Endothelial cell of umbilical vein (primary cell): ENCODE measurements at regions of chr2 and their contacts with region 1.

Region 1: GRCh38 chr2:237691908-237692600 is 64.7 kb downstream of the LRRFIP1 start:
- DNase-seq: peak; percentile 69
- H3K4me3 ChIP-seq: peak overlapping the region; percentile 81 to 86 (median 84)
- H3K27ac ChIP-seq: peak overlapping the region; percentile 87
- H3K4me1 ChIP-seq: peaks cover 55% of the 10 kb centered on the region
- H3K27me3 ChIP-seq: no peaks in the 10 kb centered on the region
- CTCF ChIP-seq: no peak
- POLR2A ChIP-seq: no peak

Region 2: DNA sequence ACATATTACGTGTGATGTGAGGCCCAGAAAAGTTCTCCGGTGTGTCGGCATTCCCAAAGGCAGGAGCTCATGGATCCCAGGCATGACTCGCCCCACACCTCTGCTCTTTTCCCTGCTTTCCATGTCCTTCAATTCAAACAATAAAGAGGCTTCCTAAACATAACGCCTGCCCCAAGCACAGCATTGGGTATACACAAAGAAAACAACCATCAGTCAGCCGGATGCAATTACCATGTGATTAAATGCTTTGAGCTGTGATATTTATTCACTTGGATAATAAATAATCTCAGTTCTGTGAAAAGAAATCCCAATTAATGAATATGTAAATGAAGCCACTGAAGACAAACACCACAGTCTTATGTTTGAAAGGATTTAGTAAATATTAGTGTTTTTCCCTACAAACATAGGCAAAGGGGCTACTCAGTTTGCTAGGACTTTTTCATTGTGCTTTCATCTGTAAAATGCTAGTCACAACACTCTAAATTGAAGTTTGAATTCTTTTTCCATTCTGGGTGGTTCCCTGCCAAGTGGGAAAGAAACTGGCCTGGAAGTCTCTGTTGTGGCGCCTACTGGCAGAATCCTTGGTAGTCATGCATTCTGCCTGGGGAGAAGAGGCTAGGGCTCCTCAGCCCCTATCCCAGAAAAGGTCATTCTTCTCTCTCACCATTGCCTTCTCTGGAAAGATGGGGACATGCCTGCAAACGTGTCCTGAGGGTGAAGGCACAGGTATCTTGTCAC is 422.7 kb before region 1 on chr2:
- CTCF ChIA-PET with region 1: no interaction called
- POLR2A ChIA-PET with region 1: no interaction called
- dilution Hi-C with region 1: no loop called
- intact Hi-C with region 1: no loop called
- DNase-seq: no peak
- H3K4me3 ChIP-seq: no peak overlapping the region
- H3K27ac ChIP-seq: no peak overlapping the region
- H3K4me1 ChIP-seq: no peaks in the 10 kb centered on the region
- H3K27me3 ChIP-seq: peaks cover 6% of the 10 kb centered on the region in 2 experiments
- CTCF ChIP-seq: no peak
- POLR2A ChIP-seq: no peak

Region 3: DNA sequence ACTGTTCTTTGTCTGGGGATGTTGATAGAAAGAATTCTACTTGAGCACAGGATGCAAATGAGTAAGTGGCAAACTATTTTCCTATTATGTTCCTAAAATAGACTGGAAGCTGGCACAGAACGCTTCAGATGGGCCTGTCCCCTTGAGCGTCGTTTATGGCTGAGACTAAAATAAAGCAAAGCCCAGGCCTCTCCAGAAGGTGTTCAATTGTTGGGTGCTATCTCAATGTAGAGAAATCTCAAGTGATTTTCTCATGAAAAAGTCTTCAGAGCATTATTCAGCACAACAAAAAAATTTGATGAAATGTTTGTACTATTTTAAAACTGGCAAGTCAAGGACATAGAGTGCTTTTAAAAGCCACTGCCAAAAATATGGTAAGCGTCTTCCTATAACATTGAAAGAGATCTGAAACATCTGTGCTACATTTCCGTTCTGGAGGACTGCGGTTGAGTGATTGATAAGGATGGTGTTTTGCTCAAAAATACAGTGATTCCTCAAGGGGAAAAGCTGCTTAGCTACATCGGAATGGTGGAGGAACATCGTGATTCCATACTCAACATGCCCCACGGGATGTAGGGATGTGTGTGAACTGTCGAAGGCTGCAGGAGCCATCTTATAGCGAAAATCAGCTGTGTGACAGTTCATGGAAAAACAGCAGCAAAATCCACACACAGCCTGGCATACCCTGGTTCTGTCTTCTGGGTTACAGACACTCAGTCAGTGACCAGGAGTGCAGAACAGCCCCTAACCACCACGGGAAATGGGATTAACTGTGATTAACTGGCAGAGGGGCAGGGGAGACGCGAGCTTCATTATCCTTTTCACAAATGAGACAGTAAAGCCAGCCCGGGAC is 75.1 kb before region 1 on chr2:
- CTCF ChIA-PET with region 1: interaction called, 4 read pairs
- POLR2A ChIA-PET with region 1: no interaction called
- dilution Hi-C with region 1: no loop called
- intact Hi-C with region 1: loop called (anchors 1 kb)
- DNase-seq: peak; percentile 91
- H3K4me3 ChIP-seq: no peak overlapping the region
- H3K27ac ChIP-seq: peak overlapping the region; percentile 99
- H3K4me1 ChIP-seq: peaks cover 54% of the 10 kb centered on the region
- H3K27me3 ChIP-seq: no peaks in the 10 kb centered on the region
- CTCF ChIP-seq: no peak
- POLR2A ChIP-seq: peak; percentile 28

Region 4: DNA sequence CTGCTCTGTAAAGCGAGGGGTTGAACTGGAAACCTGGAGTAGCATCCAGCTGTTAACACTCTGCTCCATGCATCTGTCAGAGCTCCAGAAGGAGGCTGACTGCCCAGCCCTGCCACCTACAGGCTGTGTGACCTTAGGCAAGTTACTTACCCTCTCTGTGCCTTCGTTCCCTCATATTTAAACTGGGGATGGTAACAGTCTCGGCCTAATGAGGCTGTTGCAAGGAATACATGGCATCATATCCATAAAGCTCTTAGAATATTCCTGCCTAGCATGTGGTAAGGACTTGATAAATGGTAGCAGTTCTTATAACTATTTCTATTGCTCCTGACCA is 16.0 kb after region 1 on chr2:
- CTCF ChIA-PET with region 1: interaction called, 18 read pairs
- POLR2A ChIA-PET with region 1: interaction called, 3 read pairs
- dilution Hi-C with region 1: no loop called
- intact Hi-C with region 1: loop called (anchors 1 kb)
- DNase-seq: no peak
- H3K4me3 ChIP-seq: no peak overlapping the region
- H3K27ac ChIP-seq: no peak overlapping the region
- H3K4me1 ChIP-seq: peaks cover 24% of the 10 kb centered on the region
- H3K27me3 ChIP-seq: no peaks in the 10 kb centered on the region
- CTCF ChIP-seq: no peak
- POLR2A ChIP-seq: no peak

Region 5: GRCh38 chr2:237714690-237715458 is 22.8 kb after region 1 on chr2:
- CTCF ChIA-PET with region 1: interaction called, 5 read pairs
- POLR2A ChIA-PET with region 1: no interaction called
- dilution Hi-C with region 1: no loop called
- intact Hi-C with region 1: loop called (anchors 1 kb)
- DNase-seq: peak; percentile 60
- H3K4me3 ChIP-seq: peak overlapping the region in 1 of 3 experiments; percentile 34
- H3K27ac ChIP-seq: peak overlapping the region; percentile 57
- H3K4me1 ChIP-seq: peaks cover 26% of the 10 kb centered on the region
- H3K27me3 ChIP-seq: no peaks in the 10 kb centered on the region
- CTCF ChIP-seq: no peak
- POLR2A ChIP-seq: no peak

Region 6: DNA sequence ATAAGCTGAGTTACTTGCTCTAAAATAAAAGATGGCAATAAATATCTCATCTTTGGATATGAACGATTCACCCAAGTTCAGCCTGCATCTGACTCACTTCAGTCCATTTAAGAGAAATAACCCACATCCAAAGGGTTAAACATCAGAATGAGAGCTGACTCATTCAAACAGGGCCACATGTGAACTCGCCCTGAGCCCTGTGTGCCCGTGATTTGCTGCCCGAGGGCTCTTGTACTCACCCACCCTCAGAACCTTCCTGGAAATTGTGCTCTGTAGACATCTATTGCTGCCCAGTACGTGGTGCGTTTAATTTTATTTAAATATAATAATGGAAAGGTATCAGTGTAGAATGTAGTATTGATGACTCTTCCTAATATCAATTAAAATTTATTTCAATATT is 39.6 kb after region 1 on chr2:
- CTCF ChIA-PET with region 1: interaction called, 8 read pairs
- POLR2A ChIA-PET with region 1: no interaction called
- dilution Hi-C with region 1: no loop called
- intact Hi-C with region 1: loop called (anchors 2 kb)
- DNase-seq: peak; percentile 78
- H3K4me3 ChIP-seq: no peak overlapping the region
- H3K27ac ChIP-seq: peak overlapping the region; percentile 10
- H3K4me1 ChIP-seq: peaks cover 67% of the 10 kb centered on the region
- H3K27me3 ChIP-seq: no peaks in the 10 kb centered on the region
- CTCF ChIP-seq: no peak
- POLR2A ChIP-seq: no peak